Tibial artery (tissue), 4 donors: ENCODE measurements at regions of chr17 and their contacts with region 1.

Region 1: DNA sequence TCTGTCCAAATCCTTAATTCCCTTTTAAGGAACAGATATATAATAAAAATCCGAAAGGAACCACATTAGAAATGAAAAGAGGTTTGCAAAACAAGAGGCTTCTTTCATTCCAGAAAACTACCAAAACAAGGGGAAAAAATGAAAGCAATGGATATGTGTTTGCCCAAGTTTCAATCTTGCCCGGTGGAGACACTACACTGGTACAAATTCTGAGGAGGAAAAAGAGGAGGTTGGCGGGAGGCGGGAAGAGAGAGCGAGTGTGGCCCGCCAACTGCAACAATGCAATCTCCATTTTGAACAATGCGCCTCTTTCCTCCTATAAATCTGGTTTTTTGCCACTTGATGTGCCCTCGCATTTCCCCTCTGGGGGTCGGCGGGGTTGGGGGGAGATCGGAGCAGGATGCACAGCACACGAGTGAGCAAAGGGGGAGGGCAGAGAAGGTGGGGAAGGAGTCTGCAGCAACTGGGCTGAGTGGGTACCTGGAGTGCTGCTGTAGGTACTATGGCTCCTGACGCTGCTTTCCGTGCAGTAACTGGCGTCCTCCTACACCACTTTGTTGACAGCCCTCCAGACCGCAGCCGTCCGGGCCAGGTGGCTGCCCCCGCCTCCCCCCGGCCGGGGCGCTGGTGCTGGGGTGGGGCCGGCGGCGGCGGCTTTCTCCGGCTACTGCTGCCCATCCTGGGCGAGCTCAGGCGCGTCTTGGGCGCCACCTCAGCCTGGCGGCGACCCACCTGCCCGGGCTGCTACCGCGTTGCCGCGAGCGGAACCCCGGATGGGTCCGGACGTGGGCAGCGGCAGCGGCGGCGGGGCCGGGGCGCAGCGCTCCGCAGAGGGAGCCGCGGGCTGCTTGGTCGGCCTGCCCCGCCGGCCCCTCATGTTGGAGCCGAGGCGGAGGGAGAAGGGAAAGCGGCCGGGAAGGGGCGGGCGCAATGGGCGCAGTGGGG is 93.8 kb upstream of the PLEKHM1 start:
- DNase-seq: peak; percentile 38 to 71
- H3K4me3 ChIP-seq: peak overlapping the region; percentile 63 to 67
- H3K27ac ChIP-seq: peak overlapping the region; percentile 71 to 74
- H3K4me1 ChIP-seq: peaks cover 0 to 44% (median 13%) of the 10 kb centered on the region in 4 donors
- H3K27me3 ChIP-seq: no peaks in the 10 kb centered on the region
- CTCF ChIP-seq: no peak

Region 2: GRCh38 chr17:46266656-46267544 is 682.5 kb after region 1 on chr17:
- intact Hi-C with region 1: loop called (anchors 10 kb)
- DNase-seq: peak; percentile 79 to 90
- H3K4me3 ChIP-seq: peak overlapping the region; percentile 62 to 71
- H3K27ac ChIP-seq: peak overlapping the region; percentile 82 to 92
- H3K4me1 ChIP-seq: peaks cover 0 to 9% (median 5%) of the 10 kb centered on the region in 4 donors
- H3K27me3 ChIP-seq: no peaks in the 10 kb centered on the region
- CTCF ChIP-seq: no peak